Activated B cell treated with CpG ODN at 0.5 μM for 24 hours (primary cell): ENCODE measurements at regions of chr3 and their contacts with region 1.

Region 1: DNA sequence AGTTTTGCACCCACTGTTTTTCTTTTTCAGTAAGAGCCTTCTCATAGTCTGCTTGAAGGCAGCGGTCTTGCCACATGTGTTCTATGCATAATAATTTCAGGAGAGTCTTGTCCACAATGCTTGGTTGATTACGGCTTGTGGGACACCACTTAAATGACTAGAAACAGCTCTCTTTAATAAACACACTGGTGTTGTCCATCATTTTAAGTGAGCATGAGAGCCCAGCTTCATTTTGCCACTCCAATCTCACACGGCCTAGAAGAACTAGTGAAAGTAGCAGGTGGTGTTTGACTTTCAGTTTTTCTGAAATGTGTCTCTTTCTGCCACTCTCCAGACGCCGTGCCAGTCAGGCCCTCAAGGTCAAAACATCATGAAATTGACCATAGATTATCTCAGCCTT is 292.1 kb downstream of the LPP start:
- DNase-seq: no peak
- ATAC-seq: peak; percentile 59
- H3K4me3 Mint-ChIP-seq: peak overlapping the region; percentile 57
- H3K27ac Mint-ChIP-seq: peak overlapping the region; percentile 88
- H3K4me1 Mint-ChIP-seq: peaks cover 76% of the 10 kb centered on the region
- H3K27me3 Mint-ChIP-seq: no peaks in the 10 kb centered on the region
- CTCF ChIP-seq: no peak

Region 2: DNA sequence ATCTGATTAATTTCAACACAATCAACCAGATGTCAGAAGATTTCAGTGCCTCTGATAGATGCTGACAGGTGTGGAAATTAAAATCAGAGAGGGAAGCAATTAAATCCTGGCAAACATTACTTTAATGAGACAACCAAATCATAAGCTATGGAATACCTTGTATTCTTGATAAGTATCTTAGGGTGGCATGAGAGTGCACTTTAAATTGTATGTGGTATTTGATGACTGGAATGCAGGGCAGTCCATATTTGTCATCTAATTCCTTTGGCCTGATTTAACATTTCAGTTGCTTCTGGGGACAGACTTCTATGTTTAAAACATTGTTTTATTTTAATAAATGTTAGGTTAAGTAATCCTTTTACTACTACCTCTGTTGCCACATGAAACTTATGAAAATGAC is 107.9 kb before region 1 on chr3:
- CTCF ChIA-PET with region 1: no interaction called
- POLR2A ChIA-PET with region 1: no interaction called
- intact Hi-C with region 1: no loop called
- DNase-seq: no peak
- ATAC-seq: no peak
- H3K4me3 Mint-ChIP-seq: no peak overlapping the region
- H3K27ac Mint-ChIP-seq: no peak overlapping the region
- H3K4me1 Mint-ChIP-seq: peaks cover 43% of the 10 kb centered on the region
- H3K27me3 Mint-ChIP-seq: no peaks in the 10 kb centered on the region
- CTCF ChIP-seq: no peak

Region 3: DNA sequence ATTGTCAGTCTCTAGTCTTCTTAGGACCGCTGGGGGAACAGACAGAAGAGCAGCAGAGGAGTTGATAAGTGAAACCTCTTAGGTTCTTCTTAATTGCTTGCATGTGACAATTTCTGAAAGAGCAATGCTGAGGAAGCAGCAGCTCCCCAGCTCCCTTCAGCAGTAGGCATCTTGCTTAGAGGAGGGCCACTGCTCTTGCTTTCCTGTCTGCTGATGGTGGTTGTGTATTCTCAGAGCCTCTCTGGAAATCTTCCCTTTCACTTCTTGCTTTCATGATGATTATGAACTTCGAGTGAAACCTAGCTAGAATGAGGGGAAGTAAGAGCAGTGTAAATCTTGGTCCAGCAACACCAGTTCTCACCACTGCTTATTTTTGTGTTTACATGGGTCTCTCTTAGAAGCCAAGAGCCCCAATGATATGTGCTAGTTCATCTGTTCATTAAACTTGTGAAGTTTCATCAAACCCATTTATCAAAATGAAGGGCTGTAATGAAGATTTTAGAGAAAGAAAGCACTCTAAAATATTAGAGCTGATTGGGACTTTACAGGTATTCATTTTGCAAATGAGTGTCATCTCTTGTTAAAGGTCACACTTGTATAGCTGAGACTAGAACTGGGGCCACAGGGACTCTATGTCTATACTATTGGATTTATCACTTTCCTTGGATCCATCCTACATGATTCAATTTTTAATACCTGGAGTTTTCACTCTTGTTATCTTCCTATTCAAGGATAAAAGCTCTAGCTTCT is 45.3 kb before region 1 on chr3:
- CTCF ChIA-PET with region 1: interaction called, 3 read pairs
- POLR2A ChIA-PET with region 1: interaction called, 27 read pairs
- intact Hi-C with region 1: no loop called
- DNase-seq: no peak
- ATAC-seq: peak; percentile 82
- H3K4me3 Mint-ChIP-seq: peak overlapping the region; percentile 56
- H3K27ac Mint-ChIP-seq: peak overlapping the region; percentile 91
- H3K4me1 Mint-ChIP-seq: peaks cover 93% of the 10 kb centered on the region
- H3K27me3 Mint-ChIP-seq: no peaks in the 10 kb centered on the region
- CTCF ChIP-seq: no peak

Region 4: DNA sequence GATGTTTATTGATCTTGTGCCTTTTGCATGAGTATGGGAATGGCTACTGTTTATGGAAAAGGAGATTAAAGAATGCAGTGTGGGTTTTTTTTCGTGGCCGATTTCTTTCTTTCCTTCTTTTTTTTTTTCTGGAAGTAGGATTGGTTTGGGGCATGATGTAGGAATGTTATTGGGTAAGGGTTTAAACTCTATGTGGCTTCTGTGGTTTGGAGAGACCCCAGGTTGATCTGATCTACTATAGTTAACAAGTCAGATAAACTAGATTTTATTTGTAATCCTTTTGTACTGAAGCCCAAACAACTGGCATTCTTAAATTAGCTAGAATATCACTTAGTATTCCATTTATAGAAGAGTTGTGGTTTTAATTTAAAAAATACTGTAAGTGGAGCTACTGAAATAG is 12.7 kb after region 1 on chr3:
- CTCF ChIA-PET with region 1: no interaction called
- POLR2A ChIA-PET with region 1: no interaction called
- intact Hi-C with region 1: loop called (anchors 1 kb)
- DNase-seq: no peak
- ATAC-seq: no peak
- H3K4me3 Mint-ChIP-seq: no peak overlapping the region
- H3K27ac Mint-ChIP-seq: no peak overlapping the region
- H3K4me1 Mint-ChIP-seq: peaks cover 35% of the 10 kb centered on the region
- H3K27me3 Mint-ChIP-seq: no peaks in the 10 kb centered on the region
- CTCF ChIP-seq: no peak

Region 5: GRCh38 chr3:188489639-188490405 is 43.8 kb after region 1 on chr3:
- CTCF ChIA-PET with region 1: no interaction called
- POLR2A ChIA-PET with region 1: interaction called, 3 read pairs
- intact Hi-C with region 1: loop called (anchors 2 kb)
- DNase-seq: no peak
- ATAC-seq: peak; percentile 88
- H3K4me3 Mint-ChIP-seq: peak overlapping the region; percentile 57
- H3K27ac Mint-ChIP-seq: peak overlapping the region; percentile 84
- H3K4me1 Mint-ChIP-seq: peaks cover 48% of the 10 kb centered on the region
- H3K27me3 Mint-ChIP-seq: no peaks in the 10 kb centered on the region
- CTCF ChIP-seq: no peak

Region 6: DNA sequence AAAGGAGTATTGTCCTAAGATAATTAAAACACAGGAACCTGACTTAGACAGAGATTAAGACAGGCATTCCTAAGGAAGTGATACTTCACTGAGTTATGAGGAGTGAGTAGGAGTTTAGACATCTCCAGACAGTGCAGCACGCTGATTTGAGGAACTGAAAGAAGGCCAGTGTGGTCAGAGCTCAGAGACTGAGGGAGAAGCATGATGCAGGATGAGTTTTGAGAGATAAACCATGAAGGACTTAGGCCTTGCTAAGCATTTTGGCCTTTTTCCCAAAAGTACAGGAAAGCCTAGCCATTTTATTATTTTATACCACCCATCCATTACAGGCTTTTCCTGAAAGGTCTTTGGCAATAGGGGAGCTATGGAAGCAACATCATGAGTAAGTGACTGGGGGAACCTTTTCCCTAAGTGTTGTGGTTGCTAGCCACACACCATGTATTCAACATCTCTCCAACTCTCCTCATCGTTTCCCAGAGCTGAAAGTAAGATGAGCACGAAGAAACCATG is 350.2 kb after region 1 on chr3:
- CTCF ChIA-PET with region 1: no interaction called
- POLR2A ChIA-PET with region 1: no interaction called
- intact Hi-C with region 1: no loop called
- DNase-seq: no peak
- ATAC-seq: peak; percentile 83
- H3K4me3 Mint-ChIP-seq: no peak overlapping the region
- H3K27ac Mint-ChIP-seq: peak overlapping the region; percentile 0
- H3K4me1 Mint-ChIP-seq: peaks cover 16% of the 10 kb centered on the region
- H3K27me3 Mint-ChIP-seq: no peaks in the 10 kb centered on the region
- CTCF ChIP-seq: no peak